ENCODE measurements at regions of chr6 and their contacts with region 1.

Region 1: DNA sequence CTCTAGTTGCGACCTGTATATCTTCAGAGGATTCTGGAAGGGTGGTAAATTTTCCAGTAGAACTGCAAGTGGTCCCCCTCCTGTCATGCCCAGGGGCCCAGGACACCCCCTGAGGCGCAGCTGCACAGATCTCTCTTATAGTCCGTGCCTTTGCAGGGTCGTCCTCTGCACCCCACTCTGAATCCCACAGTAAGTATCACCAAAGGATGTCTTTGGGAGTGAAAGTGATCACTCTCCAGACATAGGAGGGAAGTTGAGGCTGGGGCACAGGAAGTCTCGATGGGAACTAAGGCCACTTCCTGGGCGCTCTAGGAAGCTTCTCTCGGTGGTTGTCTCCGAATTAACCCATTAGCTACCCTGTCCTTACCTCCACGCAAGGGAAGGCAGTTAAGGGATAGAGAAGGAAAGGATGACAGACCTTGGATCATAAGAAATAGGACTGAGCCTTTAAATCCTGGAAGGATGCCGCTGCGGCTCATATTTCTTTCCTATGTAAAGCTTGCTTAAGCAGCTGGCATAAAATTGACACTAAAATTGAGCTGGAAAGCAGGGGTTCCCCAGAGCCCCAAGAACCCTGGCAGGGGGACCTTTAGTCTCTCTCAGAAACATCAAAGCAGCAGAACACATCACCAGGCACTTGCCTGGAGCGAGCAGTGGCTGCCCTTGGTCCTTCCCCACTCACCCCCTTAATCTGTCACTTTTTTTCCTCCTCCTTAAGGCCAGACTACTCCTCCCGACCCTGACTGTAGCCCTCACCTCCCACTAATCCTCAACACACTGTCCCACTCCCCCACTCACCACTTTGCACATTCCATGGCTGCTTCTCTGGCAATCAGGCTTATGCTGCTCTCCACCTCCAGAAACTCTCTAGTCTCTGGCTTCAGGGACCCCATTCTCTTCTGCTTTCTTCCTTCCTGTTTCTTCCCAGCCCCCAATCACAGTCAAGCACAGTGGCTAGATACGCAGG is at the start of gene ZKSCAN4:
- DNase-seq: peak; percentile 64 to 92 (median 85)
- ATAC-seq: peak; percentile 92
- H3K4me3 ChIP-seq: peak within 1 kb of the TSS; percentile 85 to 94
- H3K4me3 Mint-ChIP-seq: peak within 1 kb of the TSS; percentile 98
- H3K27ac ChIP-seq: peak within 1 kb of the TSS; percentile 50 to 66
- H3K27ac Mint-ChIP-seq: peak within 1 kb of the TSS; percentile 97
- H3K4me1 ChIP-seq: peaks cover 18% of the 10 kb centered on the region
- H3K4me1 Mint-ChIP-seq: peaks cover 40% of the 10 kb centered on the region
- H3K27me3 ChIP-seq: no peaks in the 10 kb centered on the region
- H3K27me3 Mint-ChIP-seq: peaks cover 3% of the 10 kb centered on the region
- CTCF ChIP-seq: no peak
- total RNA-seq, gene ZKSCAN4: 1.4 TPM

Region 2: DNA sequence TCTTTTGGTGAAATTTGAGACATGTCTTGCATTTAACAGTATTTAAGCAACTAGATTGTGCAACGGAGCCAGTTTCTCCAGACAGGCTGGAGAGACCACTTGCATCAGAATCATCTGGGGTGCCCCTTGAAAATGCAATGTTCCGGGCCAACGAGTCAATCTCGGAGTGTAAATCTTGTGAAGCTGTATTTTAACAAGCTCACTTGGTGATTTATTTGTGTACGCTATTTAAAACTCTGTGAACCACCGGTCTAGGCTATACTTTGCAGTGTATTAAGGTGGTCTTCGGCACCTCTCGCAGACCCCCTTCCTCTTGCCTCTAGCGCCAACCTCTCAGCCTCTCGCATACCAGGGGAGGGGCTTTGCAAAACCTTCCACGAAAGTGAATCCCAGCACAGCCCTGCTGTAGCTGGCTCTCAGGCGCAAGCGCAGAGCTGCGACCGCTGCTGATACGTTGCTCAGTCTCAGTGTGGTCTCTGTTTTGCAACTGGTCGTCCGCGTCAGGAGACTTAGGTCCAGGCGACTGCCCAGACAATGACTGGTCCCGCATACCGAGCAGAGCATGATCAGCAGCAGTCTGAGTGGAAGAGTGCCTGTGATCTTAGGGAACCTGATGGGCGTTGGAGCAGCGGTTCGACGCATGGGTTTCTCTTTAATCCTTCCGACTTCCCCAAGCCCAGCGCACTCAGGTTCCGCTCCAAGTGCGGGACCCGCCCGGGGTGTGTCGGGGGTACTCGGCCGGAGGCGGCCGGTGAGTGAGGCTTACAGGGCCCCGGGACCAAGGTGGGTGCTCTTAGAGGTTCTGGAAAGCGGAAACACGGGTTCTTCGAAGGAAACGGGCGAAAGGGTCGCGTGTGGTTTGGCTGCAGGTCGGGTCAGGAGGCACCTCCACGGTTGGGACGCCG is 863.7 kb before region 1 on chr6 and contains the start of gene ZNF391:
- CTCF ChIA-PET with region 1: no interaction called
- POLR2A ChIA-PET with region 1: no interaction called
- intact Hi-C with region 1: loop called in 1 of 2 experiments (anchors 2 kb)
- DNase-seq: peak; percentile 41 to 86 (median 67)
- ATAC-seq: peak; percentile 90
- H3K4me3 ChIP-seq: peak within 1 kb of the TSS; percentile 66 to 72
- H3K4me3 Mint-ChIP-seq: peak within 1 kb of the TSS; percentile 98
- H3K27ac ChIP-seq: peak within 1 kb of the TSS; percentile 45 to 55
- H3K27ac Mint-ChIP-seq: peak within 1 kb of the TSS; percentile 94
- H3K4me1 ChIP-seq: peaks cover 9% of the 10 kb centered on the region
- H3K4me1 Mint-ChIP-seq: peaks cover 15% of the 10 kb centered on the region
- H3K27me3 ChIP-seq: no peaks in the 10 kb centered on the region
- H3K27me3 Mint-ChIP-seq: no peaks in the 10 kb centered on the region
- CTCF ChIP-seq: no peak
- total RNA-seq, gene ZNF391: 0.72 to 1.1 TPM

Region 3: GRCh38 chr6:28136585-28137504 is 115.4 kb before region 1 on chr6:
- CTCF ChIA-PET with region 1: interaction called, 3 read pairs
- POLR2A ChIA-PET with region 1: interaction called, 8 read pairs
- intact Hi-C with region 1: loop called (anchors 1 kb)
- DNase-seq: peak; percentile 52 to 91 (median 77)
- ATAC-seq: peak; percentile 35
- H3K4me3 ChIP-seq: peak overlapping the region; percentile 79 to 88
- H3K4me3 Mint-ChIP-seq: peak overlapping the region; percentile 94
- H3K27ac ChIP-seq: peak overlapping the region; percentile 87 to 92
- H3K27ac Mint-ChIP-seq: peak overlapping the region; percentile 99
- H3K4me1 ChIP-seq: peaks cover 28% of the 10 kb centered on the region
- H3K4me1 Mint-ChIP-seq: peaks cover 71% of the 10 kb centered on the region
- H3K27me3 ChIP-seq: no peaks in the 10 kb centered on the region
- H3K27me3 Mint-ChIP-seq: no peaks in the 10 kb centered on the region
- CTCF ChIP-seq: no peak

Region 4: GRCh38 chr6:28266962-28267694 is 14.8 kb after region 1 on chr6 and contains the start of gene ZSCAN26:
- CTCF ChIA-PET with region 1: interaction called, 5 read pairs
- POLR2A ChIA-PET with region 1: interaction called, 38 read pairs
- intact Hi-C with region 1: loop called (anchors 1 kb)
- DNase-seq: peak; percentile 76 to 93 (median 88)
- ATAC-seq: peak; percentile 95
- H3K4me3 ChIP-seq: peak within 1 kb of the TSS; percentile 92 to 97
- H3K4me3 Mint-ChIP-seq: no peak within 1 kb of the TSS
- H3K27ac ChIP-seq: peak within 1 kb of the TSS; percentile 77 to 87
- H3K27ac Mint-ChIP-seq: no peak within 1 kb of the TSS
- H3K4me1 ChIP-seq: peaks cover 21% of the 10 kb centered on the region
- H3K4me1 Mint-ChIP-seq: peaks cover 31% of the 10 kb centered on the region
- H3K27me3 ChIP-seq: no peaks in the 10 kb centered on the region
- H3K27me3 Mint-ChIP-seq: no peaks in the 10 kb centered on the region
- CTCF ChIP-seq: no peak
- total RNA-seq, gene ZSCAN26: 11.1 to 14.7 TPM

Region 5: DNA sequence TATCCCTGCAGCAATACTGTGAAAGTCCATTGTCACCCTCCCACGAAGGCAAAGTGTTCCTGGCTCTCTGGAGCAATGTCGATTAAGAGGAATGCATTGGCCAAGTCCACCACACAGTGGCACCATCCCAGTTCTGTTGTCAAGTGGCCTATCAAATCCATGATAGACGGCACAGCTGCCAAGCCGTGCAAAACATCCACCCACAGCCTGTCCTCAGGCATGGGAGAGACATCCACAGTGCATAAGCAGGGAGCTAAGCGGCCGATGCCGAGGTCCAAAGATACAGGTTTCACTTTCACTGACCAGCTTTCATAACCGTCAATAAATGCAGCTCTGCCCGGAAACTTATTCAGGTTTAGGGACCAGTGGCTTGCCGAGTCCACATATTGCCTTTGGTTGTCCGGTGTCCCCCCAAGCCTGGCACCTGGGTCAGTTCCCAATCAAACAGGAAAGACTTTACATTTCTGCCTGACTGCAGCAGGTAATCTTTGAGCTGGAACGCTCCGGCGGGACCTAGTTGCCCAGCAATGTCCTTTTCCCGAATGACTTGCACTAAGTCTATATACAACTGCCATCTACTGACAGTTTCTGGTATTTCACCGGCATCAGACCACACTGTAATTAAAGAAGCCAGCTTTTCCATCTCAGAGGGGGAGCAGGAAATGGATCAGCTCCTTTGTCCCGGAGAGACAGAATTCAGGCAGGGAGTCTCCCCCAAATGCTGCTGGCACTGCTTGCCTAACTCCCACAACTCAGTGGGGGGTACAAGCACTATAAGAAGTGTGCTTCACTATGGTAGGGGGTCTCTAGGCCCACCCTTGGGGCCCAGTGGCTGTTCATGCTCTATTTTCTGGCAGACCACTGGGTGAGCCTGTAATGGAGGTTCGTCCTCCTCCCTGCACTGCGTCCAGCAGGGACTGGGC is 103.7 kb after region 1 on chr6:
- CTCF ChIA-PET with region 1: interaction called, 14 read pairs
- POLR2A ChIA-PET with region 1: no interaction called
- intact Hi-C with region 1: loop called in 1 of 2 experiments (anchors 1 kb)
- DNase-seq: peak in 8 of 9 experiments; percentile 32 to 85 (median 62)
- ATAC-seq: peak; percentile 91
- H3K4me3 ChIP-seq: peak overlapping the region; percentile 39 to 65
- H3K4me3 Mint-ChIP-seq: peak overlapping the region; percentile 90
- H3K27ac ChIP-seq: peak overlapping the region in 1 of 2 experiments; percentile 27
- H3K27ac Mint-ChIP-seq: peak overlapping the region; percentile 52
- H3K4me1 ChIP-seq: peaks cover 17% of the 10 kb centered on the region
- H3K4me1 Mint-ChIP-seq: peaks cover 33% of the 10 kb centered on the region
- H3K27me3 ChIP-seq: no peaks in the 10 kb centered on the region
- H3K27me3 Mint-ChIP-seq: no peaks in the 10 kb centered on the region
- CTCF ChIP-seq: peak; percentile 83

Region 6: GRCh38 chr6:28586962-28587745 is 334.9 kb after region 1 on chr6:
- CTCF ChIA-PET with region 1: no interaction called
- POLR2A ChIA-PET with region 1: no interaction called
- intact Hi-C with region 1: loop called in 1 of 2 experiments (anchors 2 kb)
- DNase-seq: peak; percentile 11 to 78 (median 58)
- ATAC-seq: peak; percentile 77
- H3K4me3 ChIP-seq: peak overlapping the region; percentile 46 to 58
- H3K4me3 Mint-ChIP-seq: peak overlapping the region; percentile 82
- H3K27ac ChIP-seq: no peak overlapping the region
- H3K27ac Mint-ChIP-seq: no peak overlapping the region
- H3K4me1 ChIP-seq: peaks cover 13% of the 10 kb centered on the region
- H3K4me1 Mint-ChIP-seq: peaks cover 23% of the 10 kb centered on the region
- H3K27me3 ChIP-seq: peaks cover 28 to 36% of the 10 kb centered on the region in 2 experiments
- H3K27me3 Mint-ChIP-seq: peaks cover 77% of the 10 kb centered on the region
- CTCF ChIP-seq: no peak

Measured in CD8-positive, alpha-beta T cell (primary cell).